MCF 10A (cell line): ENCODE measurements at regions of chr3 and their contacts with region 1.

Region 1: GRCh38 chr3:20185701-20186598 is at the start of gene SGO1:
- DNase-seq: peak; percentile 98
- H3K4me3 Mint-ChIP-seq: no peak within 1 kb of the TSS
- H3K27ac Mint-ChIP-seq: no peak within 1 kb of the TSS
- H3K4me1 Mint-ChIP-seq: no peaks in the 10 kb centered on the region
- H3K27me3 Mint-ChIP-seq: no peaks in the 10 kb centered on the region
- CTCF ChIP-seq: no peak
- total RNA-seq, gene SGO1: 6.8 and 12.2 TPM in 2 replicates

Region 2: GRCh38 chr3:19946832-19947548 is 239.0 kb before region 1 on chr3 and contains the start of gene RAB5A:
- CTCF ChIA-PET with region 1: no interaction called
- POLR2A ChIA-PET with region 1: interaction called, 17 read pairs
- intact Hi-C with region 1: loop called (anchors 1 kb)
- DNase-seq: peak; percentile 98
- H3K4me3 Mint-ChIP-seq: peak within 1 kb of the TSS; percentile 85
- H3K27ac Mint-ChIP-seq: peak within 1 kb of the TSS; percentile 98
- H3K4me1 Mint-ChIP-seq: peaks cover 13% of the 10 kb centered on the region
- H3K27me3 Mint-ChIP-seq: no peaks in the 10 kb centered on the region
- CTCF ChIP-seq: no peak
- total RNA-seq, gene RAB5A: 89.8 and 102 TPM in 2 replicates

Region 3: GRCh38 chr3:20054549-20054987 is 131.4 kb before region 1 on chr3:
- CTCF ChIA-PET with region 1: interaction called, 4 read pairs
- POLR2A ChIA-PET with region 1: interaction called, 30 read pairs
- intact Hi-C with region 1: loop called (anchors 1 kb)
- DNase-seq: peak; percentile 100
- H3K4me3 Mint-ChIP-seq: no peak overlapping the region
- H3K27ac Mint-ChIP-seq: no peak overlapping the region
- H3K4me1 Mint-ChIP-seq: no peaks in the 10 kb centered on the region
- H3K27me3 Mint-ChIP-seq: no peaks in the 10 kb centered on the region
- CTCF ChIP-seq: no peak

Region 4: DNA sequence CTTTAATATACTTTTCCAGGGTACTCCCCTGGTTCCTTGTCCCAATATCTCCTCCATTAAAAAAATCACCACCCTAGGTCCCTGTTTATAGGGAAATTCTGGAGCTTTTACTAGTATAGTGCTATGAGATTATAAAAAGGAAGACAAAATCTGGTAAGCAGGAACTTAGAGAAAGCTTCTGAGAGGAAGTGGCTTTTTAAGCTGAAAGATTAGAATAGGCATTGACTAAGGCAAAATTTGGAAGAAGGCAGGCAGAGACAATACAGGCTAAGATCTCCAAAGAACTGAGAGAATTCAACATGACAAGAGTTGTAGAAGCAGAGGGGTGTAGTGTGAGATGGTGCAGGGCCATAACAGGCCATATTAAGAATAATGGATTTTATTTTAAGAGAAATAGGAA is 25.7 kb before region 1 on chr3:
- CTCF ChIA-PET with region 1: no interaction called
- POLR2A ChIA-PET with region 1: no interaction called
- intact Hi-C with region 1: no loop called
- DNase-seq: no peak
- H3K4me3 Mint-ChIP-seq: no peak overlapping the region
- H3K27ac Mint-ChIP-seq: peak overlapping the region; percentile 85
- H3K4me1 Mint-ChIP-seq: no peaks in the 10 kb centered on the region
- H3K27me3 Mint-ChIP-seq: no peaks in the 10 kb centered on the region
- CTCF ChIP-seq: no peak